ENCODE measurements at regions of chr14 and their contacts with region 1.

Region 1: DNA sequence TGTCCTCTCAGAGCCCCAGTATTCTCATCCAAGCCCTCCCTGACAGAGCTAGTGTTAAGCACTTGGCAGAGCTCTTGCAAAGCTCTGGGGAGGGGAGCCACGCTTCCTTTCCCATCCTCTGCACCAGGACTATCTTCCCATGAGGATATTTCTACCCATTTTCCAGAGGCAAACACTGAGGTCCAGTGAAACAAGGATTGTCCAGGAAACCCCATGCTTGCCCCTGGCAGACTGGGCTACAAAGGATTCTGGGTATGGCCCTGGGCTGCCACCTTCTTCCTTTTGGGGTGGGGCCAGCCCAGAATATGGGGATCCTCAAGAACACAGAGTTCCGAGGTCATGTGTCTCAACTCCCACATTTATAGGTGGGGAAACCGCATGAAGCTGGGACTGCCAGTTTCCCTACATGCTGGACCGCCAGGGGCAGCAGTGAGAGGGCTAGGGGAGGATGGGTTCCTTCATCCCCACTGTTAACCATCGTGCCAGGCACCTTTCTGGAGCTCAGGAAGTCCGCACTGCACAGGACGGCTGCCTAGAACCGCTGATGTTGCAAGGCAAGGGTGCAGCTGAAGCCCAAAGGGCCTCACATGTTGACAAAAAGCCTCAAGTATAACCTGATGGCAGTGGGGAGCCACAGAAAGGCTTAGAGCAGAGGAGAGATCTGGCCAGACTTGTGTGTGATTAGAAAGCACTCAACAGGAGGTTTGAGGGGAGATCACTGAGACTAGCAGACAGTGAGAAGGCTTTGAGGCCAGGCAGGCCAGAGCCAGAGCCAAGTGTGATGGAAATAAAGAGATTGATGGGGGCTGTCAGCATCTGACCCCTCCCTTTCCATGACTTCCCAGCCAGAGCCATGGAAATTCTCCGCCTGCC is 5.5 kb upstream of the CCDC85C start:
- DNase-seq: peak; percentile 62 to 68
- ATAC-seq: peak; percentile 50 to 64; a peak in 5 of 6 replicates
- H3K4me3 ChIP-seq: no peak overlapping the region
- H3K27ac ChIP-seq: peak overlapping the region in 1 of 2 experiments; percentile 64; a peak in 4 of 6 replicates
- H3K4me1 ChIP-seq: peaks cover 11% of the 10 kb centered on the region; the same call in 2 of the 3 replicates
- CTCF ChIP-seq: peak; percentile 53
- EP300 ChIP-seq: no peak
- POLR2A ChIP-seq: no peak
- RAD21 ChIP-seq: peak in 1 of 2 experiments; percentile 44; a peak in 2 of 5 replicates

Region 2: DNA sequence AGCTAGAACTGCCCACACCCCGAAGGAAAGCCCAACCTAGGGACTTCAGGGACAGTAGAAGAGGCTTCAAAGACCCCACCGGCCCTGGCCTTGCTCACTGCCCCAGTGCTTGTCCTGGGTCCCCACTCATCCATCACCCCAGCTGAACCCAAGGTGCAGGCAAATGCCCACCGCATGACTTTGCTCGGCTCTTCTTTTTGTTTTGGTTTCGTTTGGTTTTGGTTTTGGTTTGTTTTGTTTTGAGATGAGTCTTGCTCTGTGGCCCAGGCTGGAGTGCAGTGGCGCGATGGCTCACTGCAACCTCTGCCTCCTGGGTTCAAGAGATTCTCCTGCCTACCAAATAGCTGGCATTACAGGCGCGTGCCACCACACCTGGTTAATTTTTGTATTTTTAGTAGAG is 14.4 kb before region 1 on chr14:
- CTCF ChIA-PET with region 1: interaction called, 10 read pairs
- POLR2A ChIA-PET with region 1: no interaction called
- DNase-seq: no peak
- ATAC-seq: no peak
- H3K4me3 ChIP-seq: no peak overlapping the region
- H3K27ac ChIP-seq: no peak overlapping the region
- H3K4me1 ChIP-seq: peaks cover 70% of the 10 kb centered on the region
- CTCF ChIP-seq: no peak
- EP300 ChIP-seq: no peak
- POLR2A ChIP-seq: no peak
- RAD21 ChIP-seq: no peak

Region 3: GRCh38 chr14:99619835-99620834 is 10.7 kb after region 1 on chr14:
- CTCF ChIA-PET with region 1: interaction called, 31 read pairs
- POLR2A ChIA-PET with region 1: no interaction called
- DNase-seq: no peak
- ATAC-seq: no peak
- H3K4me3 ChIP-seq: no peak overlapping the region
- H3K27ac ChIP-seq: no peak overlapping the region
- H3K4me1 ChIP-seq: no peaks in the 10 kb centered on the region
- CTCF ChIP-seq: no peak
- EP300 ChIP-seq: no peak
- POLR2A ChIP-seq: no peak
- RAD21 ChIP-seq: no peak

Region 4: GRCh38 chr14:99706107-99706900 is 96.8 kb after region 1 on chr14:
- CTCF ChIA-PET with region 1: no interaction called
- POLR2A ChIA-PET with region 1: no interaction called
- DNase-seq: no peak
- ATAC-seq: no peak
- H3K4me3 ChIP-seq: no peak overlapping the region
- H3K27ac ChIP-seq: no peak overlapping the region
- H3K4me1 ChIP-seq: no peaks in the 10 kb centered on the region
- CTCF ChIP-seq: no peak
- EP300 ChIP-seq: no peak
- POLR2A ChIP-seq: no peak
- RAD21 ChIP-seq: no peak

Region 5: GRCh38 chr14:99718031-99718810 is 108.7 kb after region 1 on chr14:
- CTCF ChIA-PET with region 1: no interaction called
- POLR2A ChIA-PET with region 1: no interaction called
- DNase-seq: no peak
- ATAC-seq: no peak
- H3K4me3 ChIP-seq: no peak overlapping the region
- H3K27ac ChIP-seq: no peak overlapping the region
- H3K4me1 ChIP-seq: no peaks in the 10 kb centered on the region
- CTCF ChIP-seq: no peak
- EP300 ChIP-seq: no peak
- POLR2A ChIP-seq: no peak
- RAD21 ChIP-seq: no peak

Region 6: GRCh38 chr14:100015251-100015655 is 405.8 kb after region 1 on chr14:
- CTCF ChIA-PET with region 1: no interaction called
- POLR2A ChIA-PET with region 1: no interaction called
- DNase-seq: no peak
- ATAC-seq: no peak
- H3K4me3 ChIP-seq: no peak overlapping the region
- H3K27ac ChIP-seq: no peak overlapping the region
- H3K4me1 ChIP-seq: peaks cover 31% of the 10 kb centered on the region
- CTCF ChIP-seq: no peak
- EP300 ChIP-seq: no peak
- POLR2A ChIP-seq: no peak
- RAD21 ChIP-seq: no peak

Region 7: DNA sequence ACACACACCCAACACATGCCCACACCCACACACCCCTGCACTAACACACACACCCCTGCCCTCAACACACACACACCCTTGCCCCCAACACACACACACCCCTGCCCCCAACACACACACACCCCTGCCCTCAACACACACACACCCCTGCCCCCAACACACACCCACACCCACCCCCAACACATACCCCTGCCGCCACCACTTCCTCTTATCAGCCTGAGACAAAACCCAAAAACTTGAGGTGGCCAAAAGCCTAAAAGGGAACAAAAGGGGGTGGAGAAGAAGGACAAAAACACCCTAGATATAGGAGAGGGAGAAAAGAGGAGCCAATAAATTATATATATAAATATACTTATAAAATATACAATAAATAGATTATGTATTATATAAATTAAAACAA is 559.0 kb after region 1 on chr14:
- CTCF ChIA-PET with region 1: no interaction called
- POLR2A ChIA-PET with region 1: no interaction called
- DNase-seq: no peak
- ATAC-seq: no peak
- H3K4me3 ChIP-seq: no peak overlapping the region
- H3K27ac ChIP-seq: no peak overlapping the region
- H3K4me1 ChIP-seq: peaks cover 8% of the 10 kb centered on the region; the same call in 2 of the 3 replicates
- CTCF ChIP-seq: no peak
- EP300 ChIP-seq: no peak
- POLR2A ChIP-seq: no peak
- RAD21 ChIP-seq: no peak

Measured in A549 (cell line).